ENCODE measurements at regions of chr6 and their contacts with region 1.

Region 1: GRCh38 chr6:43723737-43724295 is 36.2 kb upstream of the MRPS18A start:
- DNase-seq: peak; percentile 95
- H3K4me3 Mint-ChIP-seq: peak overlapping the region; percentile 50
- H3K27ac Mint-ChIP-seq: peak overlapping the region; percentile 97
- H3K4me1 Mint-ChIP-seq: peaks cover 52% of the 10 kb centered on the region
- H3K27me3 Mint-ChIP-seq: peaks cover 10% of the 10 kb centered on the region
- CTCF ChIP-seq: peak; percentile 89

Region 2: GRCh38 chr6:43667245-43668150 is 56.3 kb before region 1 on chr6:
- CTCF ChIA-PET with region 1: interaction called, 8 read pairs
- intact Hi-C with region 1: loop called (anchors 1 kb)
- DNase-seq: peak; percentile 94
- H3K4me3 Mint-ChIP-seq: peak overlapping the region; percentile 43
- H3K27ac Mint-ChIP-seq: peak overlapping the region; percentile 80
- H3K4me1 Mint-ChIP-seq: peaks cover 40% of the 10 kb centered on the region
- H3K27me3 Mint-ChIP-seq: no peaks in the 10 kb centered on the region
- CTCF ChIP-seq: peak; percentile 98

Region 3: DNA sequence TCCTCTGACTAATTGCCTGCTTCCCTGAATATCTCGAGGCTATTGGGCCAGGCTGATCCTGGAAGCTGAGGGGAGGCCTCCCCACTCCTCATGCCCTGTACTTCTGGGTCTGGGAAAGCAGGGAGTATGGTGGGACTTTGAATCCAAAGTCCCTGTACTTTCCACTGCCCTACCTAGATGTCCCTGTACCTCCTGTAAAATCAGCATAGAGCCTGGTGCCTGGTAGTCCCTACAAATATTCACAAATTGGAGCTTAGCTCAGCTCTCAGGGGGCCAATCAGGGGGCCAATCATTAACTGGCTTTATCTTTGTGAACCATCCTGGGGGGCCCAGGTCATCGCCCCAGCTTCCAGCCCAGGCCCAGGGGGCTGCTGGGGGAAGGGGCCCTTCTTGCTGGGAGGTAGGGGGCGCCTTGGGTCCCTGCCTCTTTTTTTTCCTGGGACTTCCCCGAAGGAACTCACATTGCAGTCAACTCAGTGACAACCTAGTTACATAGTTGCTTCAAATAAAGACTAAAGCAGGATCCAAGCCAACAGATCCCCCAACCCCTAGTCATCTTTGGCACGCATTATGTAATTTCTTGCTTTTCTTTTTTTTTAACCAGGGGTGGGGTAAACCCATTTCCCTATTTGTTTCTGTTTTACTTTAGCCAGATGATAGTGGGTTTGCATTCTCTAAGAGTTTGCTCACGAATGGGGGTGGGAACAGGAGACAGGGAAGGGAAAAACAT is 39.3 kb after region 1 on chr6:
- CTCF ChIA-PET with region 1: interaction called, 40 read pairs
- intact Hi-C with region 1: loop called (anchors 1 kb)
- DNase-seq: no peak
- H3K4me3 Mint-ChIP-seq: no peak overlapping the region
- H3K27ac Mint-ChIP-seq: no peak overlapping the region
- H3K4me1 Mint-ChIP-seq: peaks cover 36% of the 10 kb centered on the region
- H3K27me3 Mint-ChIP-seq: no peaks in the 10 kb centered on the region
- CTCF ChIP-seq: peak; percentile 22

Region 4: DNA sequence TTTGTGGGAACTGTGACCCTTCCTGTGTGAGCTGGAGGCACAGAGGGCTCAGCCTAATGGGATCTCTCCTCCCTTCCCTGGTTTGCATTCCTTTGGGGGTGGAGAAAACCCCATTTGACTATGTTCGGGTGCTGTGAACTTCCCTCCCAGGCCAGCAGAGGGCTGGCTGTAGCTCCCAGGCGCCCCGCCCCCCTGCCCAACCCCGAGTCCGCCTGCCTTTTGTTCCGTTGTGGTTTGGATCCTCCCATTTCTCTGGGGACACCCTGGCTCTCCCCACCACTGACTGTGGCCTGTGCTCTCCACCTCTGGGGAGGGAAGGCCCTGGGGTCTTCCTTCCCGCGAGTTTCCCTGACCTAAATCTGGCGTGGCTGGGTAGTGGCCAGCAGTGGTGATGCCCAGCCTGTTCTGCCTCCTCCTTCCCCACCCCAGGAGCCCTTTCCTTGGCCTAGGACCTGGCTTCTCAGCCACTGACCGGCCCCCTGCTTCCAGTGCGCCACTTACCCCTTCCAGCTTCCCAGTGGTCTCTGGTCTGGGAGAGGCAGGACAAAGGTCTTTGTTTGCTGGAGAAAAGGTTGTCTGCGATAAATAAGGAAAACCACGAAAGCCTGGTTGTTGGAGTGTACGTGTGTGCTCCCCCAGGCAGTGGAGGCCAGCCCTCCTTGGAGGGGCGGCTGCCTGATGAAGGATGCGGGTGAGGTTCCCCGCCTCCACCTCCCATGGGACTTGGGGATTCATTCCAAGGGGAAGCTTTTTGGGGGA is 51.1 kb after region 1 on chr6:
- CTCF ChIA-PET with region 1: interaction called, 40 read pairs
- intact Hi-C with region 1: no loop called
- DNase-seq: peak; percentile 88
- H3K4me3 Mint-ChIP-seq: peak overlapping the region; percentile 87
- H3K27ac Mint-ChIP-seq: peak overlapping the region; percentile 85
- H3K4me1 Mint-ChIP-seq: peaks cover 45% of the 10 kb centered on the region
- H3K27me3 Mint-ChIP-seq: no peaks in the 10 kb centered on the region
- CTCF ChIP-seq: peak; percentile 98

Region 5: GRCh38 chr6:43926634-43927524 is 203.1 kb after region 1 on chr6:
- CTCF ChIA-PET with region 1: interaction called, 16 read pairs
- intact Hi-C with region 1: loop called (anchors 1 kb)
- DNase-seq: peak; percentile 98
- H3K4me3 Mint-ChIP-seq: peak overlapping the region; percentile 41
- H3K27ac Mint-ChIP-seq: peak overlapping the region; percentile 97
- H3K4me1 Mint-ChIP-seq: peaks cover 36% of the 10 kb centered on the region
- H3K27me3 Mint-ChIP-seq: no peaks in the 10 kb centered on the region
- CTCF ChIP-seq: no peak